Activated CD4-positive, alpha-beta memory T cell treated with anti-CD3 and anti-CD28 coated beads for 36 hours (primary cell): ENCODE measurements at regions of chr7 and their contacts with region 1.

Region 1: DNA sequence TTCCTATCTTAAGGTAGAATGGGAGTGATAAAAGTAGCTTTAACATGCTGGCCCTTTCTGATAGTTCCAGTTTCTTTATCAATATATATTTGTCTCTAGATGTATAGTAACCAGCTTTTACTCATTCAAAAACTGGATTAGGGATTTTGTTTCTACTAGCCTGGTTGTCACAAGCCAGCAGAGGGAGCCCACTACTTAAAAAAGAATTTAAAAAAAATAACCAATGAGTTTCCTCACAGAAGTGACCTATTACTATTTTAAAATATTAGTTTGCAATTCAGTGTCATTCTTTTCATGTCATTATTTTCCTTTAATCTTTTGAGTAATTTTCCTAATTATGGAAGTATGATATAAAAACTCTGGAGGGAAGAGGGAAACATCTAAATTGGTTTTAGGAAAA is 142.1 kb downstream of the PHTF2 start:
- DNase-seq: peak; percentile 18
- H3K4me3 Mint-ChIP-seq: no peak overlapping the region
- H3K27ac Mint-ChIP-seq: no peak overlapping the region
- H3K4me1 Mint-ChIP-seq: peaks cover 13% of the 10 kb centered on the region
- H3K27me3 Mint-ChIP-seq: no peaks in the 10 kb centered on the region

Region 2: DNA sequence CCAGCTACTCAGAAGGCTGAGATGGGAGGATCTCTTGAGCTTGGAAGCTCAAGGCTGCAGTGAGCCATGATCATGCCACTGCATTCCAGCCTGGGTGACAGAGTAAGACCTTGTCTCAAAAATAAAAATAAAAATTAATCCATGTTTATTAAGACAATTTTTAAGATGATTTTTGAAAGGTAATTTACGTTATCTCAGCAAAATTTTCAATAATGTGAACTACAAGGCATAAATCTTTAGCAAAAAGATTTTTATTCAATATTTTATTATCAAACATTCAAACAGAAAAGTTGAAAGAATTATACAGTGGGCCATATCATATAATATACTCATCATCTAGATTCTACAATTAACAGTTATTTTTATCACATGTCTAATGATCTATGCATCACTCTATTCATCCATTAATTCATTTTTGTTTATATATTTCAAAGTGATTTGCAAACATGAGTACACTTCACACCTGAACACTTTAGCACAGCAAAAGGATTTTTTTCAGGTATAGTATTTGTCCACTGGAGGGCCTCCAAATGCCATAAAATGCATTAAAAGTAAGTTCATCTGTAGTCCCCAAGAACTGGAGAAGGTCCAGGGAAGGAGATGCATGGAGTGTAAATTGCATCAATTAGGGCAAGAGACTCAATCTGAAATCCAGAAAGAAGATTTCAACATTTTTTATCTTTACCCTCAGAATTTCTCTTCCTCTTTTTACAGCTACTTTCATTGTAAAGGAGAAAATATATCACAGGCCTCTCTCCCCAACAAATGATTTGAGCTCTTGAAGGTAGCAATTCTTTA is 283.0 kb before region 1 on chr7:
- CTCF ChIA-PET with region 1: interaction called, 8 read pairs
- POLR2A ChIA-PET with region 1: no interaction called
- intact Hi-C with region 1: loop called (anchors 5 kb)
- DNase-seq: no peak
- H3K4me3 Mint-ChIP-seq: no peak overlapping the region
- H3K27ac Mint-ChIP-seq: no peak overlapping the region
- H3K4me1 Mint-ChIP-seq: no peaks in the 10 kb centered on the region
- H3K27me3 Mint-ChIP-seq: no peaks in the 10 kb centered on the region

Region 3: GRCh38 chr7:77855371-77856083 is 85.1 kb before region 1 on chr7:
- CTCF ChIA-PET with region 1: no interaction called
- POLR2A ChIA-PET with region 1: no interaction called
- intact Hi-C with region 1: no loop called
- DNase-seq: no peak
- H3K4me3 Mint-ChIP-seq: no peak overlapping the region
- H3K27ac Mint-ChIP-seq: no peak overlapping the region
- H3K4me1 Mint-ChIP-seq: peaks cover 36% of the 10 kb centered on the region
- H3K27me3 Mint-ChIP-seq: no peaks in the 10 kb centered on the region